ENCODE measurements at regions of chr21 and their contacts with region 1.

Region 1: GRCh38 chr21:17387030-17387617 is 125.7 kb upstream of the CXADR start:
- DNase-seq: peak in 26 of 35 experiments; percentile 1 to 72 (median 18)
- ATAC-seq: peak in 3 of 4 experiments; percentile 43 to 58 (median 51)
- H3K4me3 ChIP-seq: no peak overlapping the region
- H3K4me3 Mint-ChIP-seq: no peak overlapping the region
- H3K27ac ChIP-seq: no peak overlapping the region
- H3K27ac Mint-ChIP-seq: no peak overlapping the region
- H3K4me1 ChIP-seq: no peaks in the 10 kb centered on the region
- H3K4me1 Mint-ChIP-seq: no peaks in the 10 kb centered on the region
- H3K27me3 ChIP-seq: no peaks in the 10 kb centered on the region
- H3K27me3 Mint-ChIP-seq: peaks cover 0 to 12% of the 10 kb centered on the region in 2 donors

Region 2: DNA sequence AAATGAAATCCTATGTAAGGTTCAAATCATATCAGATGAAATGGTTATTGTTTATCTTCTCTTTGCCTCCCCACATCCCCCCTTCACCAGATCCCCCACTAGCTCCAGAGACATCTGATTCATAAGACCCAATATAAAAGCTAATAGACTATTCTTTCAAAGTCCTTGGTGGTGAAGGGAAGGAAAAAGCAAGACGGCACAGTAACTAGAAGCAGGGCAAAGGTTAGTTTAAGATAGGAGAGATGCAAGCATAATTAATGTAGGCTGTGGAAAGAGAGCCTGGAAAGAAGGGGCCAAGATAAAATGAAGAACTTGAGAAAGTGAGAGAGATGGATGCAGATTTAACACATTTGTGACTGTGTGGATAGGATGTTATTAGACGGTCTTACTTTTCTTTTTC is 191.8 kb after region 1 on chr21:
- CTCF ChIA-PET with region 1: interaction called in 1 of 2 experiments, 10 read pairs
- POLR2A ChIA-PET with region 1: no interaction called
- DNase-seq: no peak
- ATAC-seq: no peak
- H3K4me3 ChIP-seq: no peak overlapping the region
- H3K4me3 Mint-ChIP-seq: no peak overlapping the region
- H3K27ac ChIP-seq: no peak overlapping the region
- H3K27ac Mint-ChIP-seq: no peak overlapping the region
- H3K4me1 ChIP-seq: no peaks in the 10 kb centered on the region
- H3K4me1 Mint-ChIP-seq: no peaks in the 10 kb centered on the region
- H3K27me3 ChIP-seq: peaks cover 0 to 4% of the 10 kb centered on the region in 2 experiments
- H3K27me3 Mint-ChIP-seq: peaks cover 3% of the 10 kb centered on the region in 2 donors

Region 3: GRCh38 chr21:17585875-17586450 is 198.8 kb after region 1 on chr21:
- CTCF ChIA-PET with region 1: interaction called, 38 to 79 read pairs
- POLR2A ChIA-PET with region 1: no interaction called
- DNase-seq: peak in 3 of 35 experiments; percentile 2 to 64 (median 21)
- ATAC-seq: peak in 2 of 4 experiments; percentile 50 to 66
- H3K4me3 ChIP-seq: no peak overlapping the region
- H3K4me3 Mint-ChIP-seq: no peak overlapping the region
- H3K27ac ChIP-seq: no peak overlapping the region
- H3K27ac Mint-ChIP-seq: no peak overlapping the region
- H3K4me1 ChIP-seq: no peaks in the 10 kb centered on the region
- H3K4me1 Mint-ChIP-seq: no peaks in the 10 kb centered on the region
- H3K27me3 ChIP-seq: no peaks in the 10 kb centered on the region
- H3K27me3 Mint-ChIP-seq: no peaks in the 10 kb centered on the region